PC-9 (cell line): ENCODE measurements at regions of chr6 and their contacts with region 1.

Region 1: DNA sequence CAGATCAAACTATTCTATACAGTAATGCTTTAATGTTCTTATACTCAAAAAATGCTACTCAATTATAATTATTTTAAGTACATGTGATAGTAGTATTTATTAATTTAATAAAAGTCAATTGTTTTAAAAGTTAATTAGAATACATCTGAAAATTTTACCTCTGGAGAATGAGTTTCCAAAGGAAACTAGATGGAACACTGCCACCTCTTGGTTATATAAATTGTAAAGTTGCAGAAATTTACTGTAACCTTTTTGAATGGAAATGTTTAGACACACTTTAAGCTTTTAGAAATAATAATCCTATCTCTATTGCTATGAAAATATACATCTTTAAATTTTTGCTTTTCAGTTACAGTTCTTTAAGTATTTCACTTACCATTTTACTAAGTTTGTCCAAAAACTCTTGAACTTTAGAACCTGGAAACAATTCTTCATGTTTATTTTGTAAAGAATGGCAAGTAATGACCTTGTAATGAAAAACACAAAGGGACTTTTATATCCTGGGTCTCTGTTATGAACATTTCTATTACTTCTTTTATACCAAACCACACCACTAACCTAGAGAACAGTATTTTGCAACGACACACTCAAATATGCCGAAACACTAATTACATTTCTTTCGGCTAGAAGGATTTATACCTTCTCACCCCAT is 10.9 kb upstream of the BMP5 start:
- DNase-seq: no peak
- H3K4me3 ChIP-seq: no peak overlapping the region
- H3K27ac ChIP-seq: no peak overlapping the region
- H3K4me1 ChIP-seq: peaks cover 9% of the 10 kb centered on the region; the same call in 1 of the 2 replicates
- H3K27me3 ChIP-seq: no peaks in the 10 kb centered on the region
- CTCF ChIP-seq: peak; percentile 74

Region 2: DNA sequence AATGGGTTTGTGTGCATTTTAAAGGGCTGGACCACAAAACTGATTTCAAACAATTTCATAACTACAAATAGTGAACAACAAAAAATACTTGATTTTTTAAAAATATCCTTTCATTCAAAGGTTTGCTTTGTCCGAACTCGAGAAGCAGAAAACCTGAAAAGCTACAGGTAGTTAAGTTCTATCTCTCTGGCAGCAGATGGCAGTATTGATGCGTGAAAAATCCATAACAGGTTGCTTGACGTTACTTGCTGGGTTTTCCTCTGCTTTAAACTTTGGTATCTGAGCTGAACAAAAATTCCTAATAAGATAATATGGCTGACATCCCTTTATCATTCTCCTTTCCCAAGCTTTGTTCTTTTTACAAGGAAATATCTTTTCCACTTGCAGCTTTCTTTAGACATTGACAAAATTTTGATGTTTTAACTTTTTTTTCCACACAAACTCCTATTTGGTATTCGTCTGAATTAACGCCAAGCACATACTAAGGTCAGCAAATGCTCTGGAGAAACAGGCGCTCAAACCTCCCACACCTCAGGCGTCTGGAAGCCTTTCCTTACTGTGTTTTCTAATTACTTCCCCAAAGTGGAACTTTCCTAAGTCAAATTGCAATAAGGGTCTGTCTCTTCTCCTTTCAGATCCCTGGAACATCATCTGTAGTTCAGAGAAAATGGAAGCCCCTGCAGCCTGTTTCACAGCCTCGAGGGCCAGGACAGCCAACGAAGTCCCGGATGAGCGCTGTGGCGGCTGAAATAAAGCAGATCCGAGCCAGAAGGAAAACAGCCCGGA is 609.4 kb before region 1 on chr6:
- CTCF ChIA-PET with region 1: no interaction called
- POLR2A ChIA-PET with region 1: no interaction called
- intact Hi-C with region 1: loop called (anchors 5 kb)
- DNase-seq: peak; percentile 18 to 57
- H3K4me3 ChIP-seq: no peak overlapping the region
- H3K27ac ChIP-seq: no peak overlapping the region
- H3K4me1 ChIP-seq: no peaks in the 10 kb centered on the region; the same call in 1 of the 2 replicates
- H3K27me3 ChIP-seq: no peaks in the 10 kb centered on the region
- CTCF ChIP-seq: peak; percentile 75

Region 3: GRCh38 chr6:55528621-55529020 is 357.7 kb before region 1 on chr6:
- CTCF ChIA-PET with region 1: no interaction called
- POLR2A ChIA-PET with region 1: no interaction called
- intact Hi-C with region 1: loop called (anchors 10 kb)
- DNase-seq: peak; percentile 6 to 46
- H3K4me3 ChIP-seq: no peak overlapping the region
- H3K27ac ChIP-seq: no peak overlapping the region
- H3K4me1 ChIP-seq: no peaks in the 10 kb centered on the region
- H3K27me3 ChIP-seq: no peaks in the 10 kb centered on the region
- CTCF ChIP-seq: peak; percentile 48; the same call in 1 of the 2 replicates

Region 4: DNA sequence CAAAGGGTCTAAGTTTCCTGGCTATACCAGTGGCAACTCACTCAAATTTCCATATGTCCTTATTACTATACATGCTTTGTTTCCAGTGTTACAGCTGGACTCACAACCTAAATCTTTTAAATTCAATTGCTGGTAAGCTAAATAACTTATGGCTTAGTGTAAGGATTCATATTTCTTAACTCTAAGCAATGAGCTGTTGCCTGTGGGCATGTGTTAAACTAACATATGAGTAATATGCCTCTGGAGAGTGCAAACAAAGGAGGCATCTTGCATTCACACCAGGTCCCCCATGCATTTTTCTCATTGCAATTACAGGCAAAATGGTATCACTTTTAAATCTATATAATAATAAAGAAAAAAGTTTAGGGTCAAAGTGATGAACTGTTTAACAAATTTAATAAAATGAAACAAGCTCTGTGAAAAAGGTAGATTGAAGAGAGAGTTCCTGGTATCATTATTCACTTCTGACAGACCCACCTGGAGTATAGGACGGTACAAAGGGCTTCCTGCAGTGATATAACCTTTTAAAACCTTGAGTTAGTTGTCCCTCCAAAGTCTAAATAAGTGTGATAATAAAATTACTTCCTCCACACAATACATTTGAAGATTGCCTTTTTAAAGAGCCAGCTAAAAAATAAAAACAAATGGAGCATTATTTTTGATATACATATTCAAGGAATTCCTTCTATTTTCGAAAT is 249.8 kb before region 1 on chr6:
- CTCF ChIA-PET with region 1: no interaction called
- POLR2A ChIA-PET with region 1: no interaction called
- intact Hi-C with region 1: loop called (anchors 2 kb)
- DNase-seq: peak; percentile 25 to 86
- H3K4me3 ChIP-seq: no peak overlapping the region
- H3K27ac ChIP-seq: peak overlapping the region; percentile 51
- H3K4me1 ChIP-seq: peaks cover 20% of the 10 kb centered on the region
- H3K27me3 ChIP-seq: no peaks in the 10 kb centered on the region
- CTCF ChIP-seq: no peak

Region 5: GRCh38 chr6:55866108-55866507 is 20.2 kb before region 1 on chr6:
- CTCF ChIA-PET with region 1: interaction called, 3 read pairs
- POLR2A ChIA-PET with region 1: no interaction called
- intact Hi-C with region 1: loop called (anchors 1 kb)
- DNase-seq: peak; percentile 38 to 77
- H3K4me3 ChIP-seq: no peak overlapping the region
- H3K27ac ChIP-seq: no peak overlapping the region
- H3K4me1 ChIP-seq: peaks cover 29% of the 10 kb centered on the region
- H3K27me3 ChIP-seq: no peaks in the 10 kb centered on the region
- CTCF ChIP-seq: no peak